ENCODE measurements at regions of chr1 and their contacts with region 1.

Region 1: DNA sequence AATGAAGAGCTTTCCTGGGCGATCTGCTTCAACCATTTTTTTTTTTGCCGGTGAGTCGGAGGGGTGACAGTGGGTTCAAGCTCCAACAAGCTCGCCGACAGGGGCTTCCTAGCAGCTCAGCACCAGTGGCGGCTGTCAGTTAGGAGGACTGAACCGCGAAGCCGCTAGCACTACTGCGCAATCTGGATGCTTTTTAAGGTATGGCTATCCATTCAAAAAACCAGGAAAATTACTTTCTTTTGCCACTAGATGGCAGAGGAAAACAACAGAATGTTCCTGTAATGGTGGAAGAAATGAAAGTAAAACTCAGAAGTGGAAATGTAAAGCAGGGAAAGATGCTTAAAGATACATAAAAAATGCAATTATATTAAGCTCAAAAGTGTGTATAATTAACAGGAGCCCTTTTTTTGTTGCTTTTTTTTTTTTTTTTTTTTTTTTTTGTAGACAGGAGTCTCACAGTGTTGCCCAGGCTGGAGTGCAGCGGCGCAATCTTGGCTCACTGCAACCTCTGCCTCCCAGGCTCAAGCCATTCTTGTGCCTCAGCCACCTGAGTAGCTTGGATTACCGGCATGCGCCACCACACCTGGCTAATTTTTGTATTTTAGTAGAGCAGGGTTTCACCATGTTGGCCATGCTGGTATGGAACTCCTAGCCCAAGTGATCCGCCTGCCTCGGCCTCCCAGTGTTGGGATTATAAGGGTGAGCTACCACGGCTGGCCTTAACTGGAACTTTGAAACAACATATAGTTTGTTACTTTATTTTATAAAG is 8.5 kb downstream of the KYAT3 start:
- DNase-seq: peak; percentile 42
- H3K4me3 Mint-ChIP-seq: peak overlapping the region; percentile 27
- H3K27ac Mint-ChIP-seq: peak overlapping the region; percentile 47
- H3K4me1 Mint-ChIP-seq: peaks cover 80% of the 10 kb centered on the region
- H3K27me3 Mint-ChIP-seq: no peaks in the 10 kb centered on the region

Region 2: DNA sequence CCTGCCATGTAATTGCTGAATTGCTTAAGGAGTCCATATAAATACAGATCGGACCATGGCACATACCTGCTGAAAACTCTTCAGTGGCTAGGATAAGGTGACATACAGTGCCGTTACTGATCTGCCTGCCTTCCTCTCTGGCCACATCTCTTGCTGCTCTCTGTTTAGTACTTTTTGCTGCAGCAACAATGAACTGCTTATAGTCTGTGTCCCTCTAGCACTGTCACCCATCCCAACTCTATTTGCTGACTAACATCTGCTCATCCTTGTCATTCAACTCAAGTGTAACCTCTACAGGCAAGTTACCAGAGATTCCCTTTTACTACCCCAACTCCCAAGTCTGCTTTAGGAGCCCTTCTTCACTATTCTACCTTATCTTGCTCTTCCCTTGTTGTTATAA is 158.3 kb before region 1 on chr1:
- CTCF ChIA-PET with region 1: no interaction called
- intact Hi-C with region 1: no loop called
- DNase-seq: no peak
- H3K4me3 Mint-ChIP-seq: no peak overlapping the region
- H3K27ac Mint-ChIP-seq: no peak overlapping the region
- H3K4me1 Mint-ChIP-seq: no peaks in the 10 kb centered on the region
- H3K27me3 Mint-ChIP-seq: no peaks in the 10 kb centered on the region

Region 3: DNA sequence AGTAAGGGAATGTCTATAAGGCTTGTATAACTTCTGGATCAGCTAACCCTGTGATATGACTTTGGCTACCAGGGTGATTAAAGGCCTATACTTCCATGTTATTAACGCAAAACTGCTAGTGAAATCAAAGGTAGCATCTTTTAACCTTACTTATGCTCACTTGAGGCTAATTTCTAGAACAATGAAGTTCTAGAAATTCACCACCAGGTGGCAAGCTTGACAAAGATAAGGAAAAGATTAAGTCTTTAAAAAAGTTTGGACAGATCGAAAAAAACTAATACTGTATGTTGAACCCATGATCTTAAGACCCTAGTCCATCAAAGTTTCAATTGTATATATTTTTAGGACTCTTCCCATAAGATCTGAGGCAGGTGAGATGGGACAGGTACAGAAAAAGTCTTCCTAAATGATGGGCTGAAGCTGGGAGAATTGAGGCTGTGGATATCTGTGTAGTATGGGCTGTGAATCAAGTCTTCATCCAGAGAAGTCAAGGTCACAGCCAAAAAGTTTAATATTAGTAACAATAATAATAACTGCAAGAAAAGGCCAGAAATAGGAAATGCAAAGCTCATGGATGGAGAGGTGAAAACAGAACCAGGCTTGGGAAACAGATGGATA is 10.3 kb before region 1 on chr1:
- CTCF ChIA-PET with region 1: interaction called, 13 read pairs
- intact Hi-C with region 1: no loop called
- DNase-seq: no peak
- H3K4me3 Mint-ChIP-seq: no peak overlapping the region
- H3K27ac Mint-ChIP-seq: no peak overlapping the region
- H3K4me1 Mint-ChIP-seq: peaks cover 27% of the 10 kb centered on the region
- H3K27me3 Mint-ChIP-seq: no peaks in the 10 kb centered on the region

Region 4: GRCh38 chr1:89085781-89086180 is 101.8 kb after region 1 on chr1:
- CTCF ChIA-PET with region 1: interaction called, 4 read pairs
- intact Hi-C with region 1: loop called (anchors 5 kb)
- DNase-seq: peak; percentile 70
- H3K4me3 Mint-ChIP-seq: no peak overlapping the region
- H3K27ac Mint-ChIP-seq: no peak overlapping the region
- H3K4me1 Mint-ChIP-seq: no peaks in the 10 kb centered on the region
- H3K27me3 Mint-ChIP-seq: no peaks in the 10 kb centered on the region